Activated naive CD4-positive, alpha-beta T cell treated with anti-CD3 and anti-CD28 coated beads for 36 hours (primary cell): ENCODE measurements at regions of chr14 and their contacts with region 1.

Region 1: GRCh38 chr14:75660630-75661494 is at the starts of genes ERG28 and TTLL5:
- DNase-seq: peak; percentile 98
- H3K4me3 Mint-ChIP-seq: peak within 1 kb of the TSS; percentile 100
- H3K27ac Mint-ChIP-seq: peak within 1 kb of the TSS; percentile 98
- H3K4me1 Mint-ChIP-seq: peaks cover 18% of the 10 kb centered on the region
- H3K27me3 Mint-ChIP-seq: no peaks in the 10 kb centered on the region
- total RNA-seq, gene ERG28: 25.6 to 25.7 TPM
- total RNA-seq, gene TTLL5: 23.8 to 25.1 TPM

Region 2: DNA sequence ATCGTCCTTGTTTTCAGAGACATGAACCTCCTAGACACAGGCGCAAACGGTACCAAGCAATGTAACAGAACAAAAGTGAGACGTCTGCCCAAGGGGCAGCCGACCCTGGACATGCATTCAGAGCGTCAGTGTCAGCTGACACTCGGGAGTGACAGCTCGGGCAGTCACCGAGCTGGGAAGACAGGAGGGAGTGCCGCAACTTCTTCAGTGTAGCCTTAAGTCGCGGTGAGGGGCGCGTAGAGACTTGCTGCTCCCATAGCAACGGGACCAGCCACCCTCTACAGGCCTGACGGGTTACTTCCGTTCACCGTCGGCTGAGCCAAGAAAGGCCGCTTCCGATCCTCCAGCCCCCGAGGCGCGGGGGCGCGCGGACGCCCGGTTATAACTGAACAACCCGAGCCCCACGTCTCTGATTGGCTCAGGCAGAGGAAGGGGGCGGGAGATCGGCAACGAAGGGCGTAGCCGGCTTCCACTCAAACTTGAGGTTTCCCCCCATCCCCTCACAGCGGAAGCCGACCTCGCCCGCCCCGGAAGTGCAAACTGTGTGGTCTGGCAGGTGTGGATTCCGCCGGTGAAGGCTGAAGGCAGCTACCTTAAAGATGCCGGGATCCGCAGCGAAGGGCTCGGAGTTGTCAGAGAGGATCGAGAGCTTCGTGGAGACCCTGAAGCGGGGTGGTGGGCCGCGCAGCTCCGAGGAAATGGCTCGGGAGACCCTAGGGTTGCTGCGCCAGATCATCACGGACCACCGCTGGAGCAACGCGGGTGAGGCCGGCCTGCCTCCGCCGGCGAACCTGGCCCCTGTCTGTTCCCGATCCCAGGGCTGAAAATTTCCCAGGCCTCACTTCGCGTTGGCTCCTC is 658.2 kb before region 1 on chr14 and contains the start of gene EIF2B2:
- CTCF ChIA-PET with region 1: no interaction called
- intact Hi-C with region 1: loop called (anchors 1 kb)
- DNase-seq: peak; percentile 99
- H3K4me3 Mint-ChIP-seq: peak within 1 kb of the TSS; percentile 99
- H3K27ac Mint-ChIP-seq: peak within 1 kb of the TSS; percentile 89
- H3K4me1 Mint-ChIP-seq: peaks cover 31% of the 10 kb centered on the region
- H3K27me3 Mint-ChIP-seq: no peaks in the 10 kb centered on the region
- total RNA-seq, gene EIF2B2: 64.8 to 65.4 TPM

Region 3: GRCh38 chr14:75258615-75259466 is 402.0 kb before region 1 on chr14:
- CTCF ChIA-PET with region 1: no interaction called
- intact Hi-C with region 1: loop called (anchors 2 kb)
- DNase-seq: peak; percentile 99
- H3K4me3 Mint-ChIP-seq: peak overlapping the region; percentile 77
- H3K27ac Mint-ChIP-seq: peak overlapping the region; percentile 77
- H3K4me1 Mint-ChIP-seq: peaks cover 18% of the 10 kb centered on the region
- H3K27me3 Mint-ChIP-seq: no peaks in the 10 kb centered on the region

Region 4: GRCh38 chr14:75514673-75515628 is 145.9 kb before region 1 on chr14:
- CTCF ChIA-PET with region 1: interaction called, 3 read pairs
- intact Hi-C with region 1: loop called (anchors 2 kb)
- DNase-seq: peak; percentile 73
- H3K4me3 Mint-ChIP-seq: peak overlapping the region; percentile 70
- H3K27ac Mint-ChIP-seq: peak overlapping the region; percentile 89
- H3K4me1 Mint-ChIP-seq: peaks cover 58% of the 10 kb centered on the region
- H3K27me3 Mint-ChIP-seq: no peaks in the 10 kb centered on the region

Region 5: GRCh38 chr14:75542588-75543091 is 118.2 kb before region 1 on chr14:
- CTCF ChIA-PET with region 1: interaction called, 3 read pairs
- intact Hi-C with region 1: loop called (anchors 1 kb)
- DNase-seq: peak; percentile 97
- H3K4me3 Mint-ChIP-seq: peak overlapping the region; percentile 65
- H3K27ac Mint-ChIP-seq: peak overlapping the region; percentile 99
- H3K4me1 Mint-ChIP-seq: peaks cover 84% of the 10 kb centered on the region
- H3K27me3 Mint-ChIP-seq: no peaks in the 10 kb centered on the region

Region 6: DNA sequence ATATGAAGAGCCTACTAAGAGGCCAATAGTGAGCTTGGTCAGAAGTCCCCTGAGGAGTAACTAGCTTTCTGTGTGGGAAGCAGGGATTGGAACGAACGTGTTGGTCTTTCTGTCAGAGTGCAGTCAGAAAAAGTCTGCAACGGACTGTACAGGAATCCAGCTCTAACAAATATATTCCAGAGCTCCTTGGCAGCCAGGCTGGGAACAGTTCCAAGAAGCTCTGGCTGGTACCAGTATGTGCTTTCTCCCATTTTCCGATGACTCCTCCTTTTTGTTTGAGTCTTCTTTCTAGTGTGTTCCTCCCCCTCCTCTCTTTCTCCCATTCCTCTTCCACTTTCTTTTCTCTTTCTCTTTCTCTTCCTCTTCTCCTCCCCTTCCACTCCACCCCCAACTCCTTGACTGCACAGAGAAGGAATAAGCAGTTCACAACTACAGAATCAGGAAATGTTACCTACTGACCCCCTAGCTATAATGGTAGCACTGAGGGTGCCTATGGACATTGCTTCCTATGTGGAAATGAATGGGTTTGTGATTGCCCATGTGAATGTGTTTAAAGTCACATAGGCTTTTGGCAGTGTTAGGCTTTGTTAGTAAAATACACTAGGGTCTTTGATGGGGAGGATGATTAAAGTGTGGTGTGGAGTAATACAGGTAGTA is 60.1 kb after region 1 on chr14:
- CTCF ChIA-PET with region 1: no interaction called
- intact Hi-C with region 1: no loop called
- DNase-seq: no peak
- H3K4me3 Mint-ChIP-seq: no peak overlapping the region
- H3K27ac Mint-ChIP-seq: no peak overlapping the region
- H3K4me1 Mint-ChIP-seq: peaks cover 4% of the 10 kb centered on the region
- H3K27me3 Mint-ChIP-seq: no peaks in the 10 kb centered on the region

Region 7: GRCh38 chr14:75982266-75983018 is 321.6 kb after region 1 on chr14:
- CTCF ChIA-PET with region 1: no interaction called
- intact Hi-C with region 1: loop called (anchors 1 kb)
- DNase-seq: peak; percentile 81
- H3K4me3 Mint-ChIP-seq: peak overlapping the region; percentile 77
- H3K27ac Mint-ChIP-seq: no peak overlapping the region
- H3K4me1 Mint-ChIP-seq: peaks cover 43% of the 10 kb centered on the region
- H3K27me3 Mint-ChIP-seq: no peaks in the 10 kb centered on the region